GM12878 (cell line): ENCODE measurements at regions of chr11 and their contacts with region 1.

Region 1: GRCh38 chr11:9320047-9320446 is 5.7 kb upstream of the TMEM41B start:
- DNase-seq: no peak
- ATAC-seq: no peak
- H3K4me3 ChIP-seq: no peak overlapping the region
- H3K27ac ChIP-seq: no peak overlapping the region
- H3K4me1 ChIP-seq: peaks cover 2% of the 10 kb centered on the region; the same call in 1 of the 2 replicates
- H3K27me3 ChIP-seq: no peaks in the 10 kb centered on the region
- CTCF ChIP-seq: no peak
- EP300 ChIP-seq: no peak
- POLR2A ChIP-seq: no peak
- RAD21 ChIP-seq: no peak

Region 2: GRCh38 chr11:9363954-9364912 is 44.2 kb after region 1 on chr11:
- CTCF ChIA-PET with region 1: no interaction called
- POLR2A ChIA-PET with region 1: interaction called, 7 read pairs
- RAD21 ChIA-PET with region 1: no interaction called
- SMC1A ChIA-PET with region 1: interaction called, 7 read pairs
- in situ Hi-C with region 1: no loop called
- intact Hi-C with region 1: loop called (anchors 1 kb)
- DNase-seq: peak; percentile 36
- ATAC-seq: peak; percentile 99
- H3K4me3 ChIP-seq: peak overlapping the region; percentile 88
- H3K27ac ChIP-seq: peak overlapping the region; percentile 90
- H3K4me1 ChIP-seq: no peaks in the 10 kb centered on the region
- H3K27me3 ChIP-seq: no peaks in the 10 kb centered on the region
- CTCF ChIP-seq: no peak
- EP300 ChIP-seq: 0 out of 4 replicates have a peak, but pooled peaks have one; percentile 35 to 42
- POLR2A ChIP-seq: peak; percentile 98
- RAD21 ChIP-seq: no peak

Region 3: GRCh38 chr11:10314199-10315072 is 994.4 kb after region 1 on chr11:
- CTCF ChIA-PET with region 1: no interaction called
- POLR2A ChIA-PET with region 1: interaction called, 12 read pairs
- RAD21 ChIA-PET with region 1: no interaction called
- SMC1A ChIA-PET with region 1: no interaction called
- in situ Hi-C with region 1: no loop called
- intact Hi-C with region 1: no loop called
- DNase-seq: peak; percentile 66
- ATAC-seq: peak; percentile 77
- H3K4me3 ChIP-seq: no peak overlapping the region
- H3K27ac ChIP-seq: no peak overlapping the region
- H3K4me1 ChIP-seq: peaks cover 31% of the 10 kb centered on the region
- H3K27me3 ChIP-seq: no peaks in the 10 kb centered on the region
- CTCF ChIP-seq: no peak
- EP300 ChIP-seq: no peak
- POLR2A ChIP-seq: no peak
- RAD21 ChIP-seq: no peak